ENCODE measurements at regions of chr3 and their contacts with region 1.

Region 1: GRCh38 chr3:27632431-27633223 is 89.5 kb downstream of the EOMES start:
- DNase-seq: peak; percentile 56
- H3K4me3 Mint-ChIP-seq: peak overlapping the region; percentile 83
- H3K27ac Mint-ChIP-seq: peak overlapping the region; percentile 85
- H3K4me1 Mint-ChIP-seq: peaks cover 44% of the 10 kb centered on the region
- H3K27me3 Mint-ChIP-seq: no peaks in the 10 kb centered on the region

Region 2: DNA sequence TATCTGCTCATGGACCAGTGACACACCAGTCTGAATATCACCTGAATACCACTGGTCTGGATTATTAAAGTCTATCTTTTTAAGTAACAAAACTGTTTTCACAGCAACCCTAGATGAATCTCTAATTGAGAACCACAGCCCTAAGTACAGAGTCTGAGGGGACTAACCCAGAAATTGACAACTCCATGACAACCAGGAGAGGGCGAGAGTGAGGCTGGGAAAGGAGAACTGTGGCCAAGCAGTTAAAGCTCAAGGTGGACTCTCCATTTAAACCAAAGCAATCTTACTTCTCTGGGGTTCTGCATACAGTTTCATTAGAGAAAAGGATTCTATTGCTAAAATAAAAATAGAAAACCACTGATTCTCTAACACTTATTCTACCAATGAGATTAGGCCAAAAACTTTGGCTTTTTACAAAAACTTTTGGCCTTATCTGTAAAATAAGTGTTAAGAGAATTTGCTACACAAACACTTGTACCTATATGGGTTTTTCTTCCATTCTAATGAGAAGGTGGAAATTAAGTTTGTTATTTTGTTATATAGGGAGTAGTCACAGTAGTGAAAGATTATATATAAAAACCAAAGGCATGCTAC is 274.9 kb before region 1 on chr3:
- CTCF ChIA-PET with region 1: interaction called, 3 read pairs
- POLR2A ChIA-PET with region 1: no interaction called
- intact Hi-C with region 1: loop called (anchors 5 kb)
- DNase-seq: peak; percentile 77
- H3K4me3 Mint-ChIP-seq: no peak overlapping the region
- H3K27ac Mint-ChIP-seq: no peak overlapping the region
- H3K4me1 Mint-ChIP-seq: peaks cover 26% of the 10 kb centered on the region
- H3K27me3 Mint-ChIP-seq: no peaks in the 10 kb centered on the region

Region 3: GRCh38 chr3:27533718-27534573 is 98.7 kb before region 1 on chr3:
- CTCF ChIA-PET with region 1: no interaction called
- POLR2A ChIA-PET with region 1: no interaction called
- intact Hi-C with region 1: loop called (anchors 2 kb)
- DNase-seq: peak; percentile 70
- H3K4me3 Mint-ChIP-seq: peak overlapping the region; percentile 42
- H3K27ac Mint-ChIP-seq: peak overlapping the region; percentile 92
- H3K4me1 Mint-ChIP-seq: peaks cover 23% of the 10 kb centered on the region
- H3K27me3 Mint-ChIP-seq: no peaks in the 10 kb centered on the region

Region 4: GRCh38 chr3:27596334-27596841 is 36.2 kb before region 1 on chr3:
- CTCF ChIA-PET with region 1: interaction called, 15 read pairs
- POLR2A ChIA-PET with region 1: interaction called, 5 read pairs
- intact Hi-C with region 1: loop called (anchors 1 kb)
- DNase-seq: peak; percentile 35
- H3K4me3 Mint-ChIP-seq: no peak overlapping the region
- H3K27ac Mint-ChIP-seq: peak overlapping the region; percentile 25
- H3K4me1 Mint-ChIP-seq: peaks cover 21% of the 10 kb centered on the region
- H3K27me3 Mint-ChIP-seq: no peaks in the 10 kb centered on the region

Region 5: GRCh38 chr3:27681245-27681748 is 48.7 kb after region 1 on chr3:
- CTCF ChIA-PET with region 1: interaction called, 5 read pairs
- POLR2A ChIA-PET with region 1: no interaction called
- intact Hi-C with region 1: loop called (anchors 2 kb)
- DNase-seq: no peak
- H3K4me3 Mint-ChIP-seq: peak overlapping the region; percentile 68
- H3K27ac Mint-ChIP-seq: peak overlapping the region; percentile 72
- H3K4me1 Mint-ChIP-seq: peaks cover 19% of the 10 kb centered on the region
- H3K27me3 Mint-ChIP-seq: no peaks in the 10 kb centered on the region